Heart left ventricle (tissue), 16 donors: ENCODE measurements at regions of chr10 and their contacts with region 1.

Region 1: GRCh38 chr10:69644658-69645295 is 14.7 kb downstream of the FAM241B start:
- DNase-seq: peak in 4 of 5 donors; percentile 32 to 56 (median 49)
- ATAC-seq: peak in 3 of 4 donors; percentile 51 to 72 (median 56)
- H3K4me3 ChIP-seq: no peak overlapping the region
- H3K27ac ChIP-seq: no peak overlapping the region
- H3K4me1 ChIP-seq: no peaks in the 10 kb centered on the region
- H3K27me3 ChIP-seq: peaks cover 0 to 17% (median 4%) of the 10 kb centered on the region in 9 donors
- CTCF ChIP-seq: peak; percentile 67 to 89 (median 78)
- POLR2A ChIP-seq: no peak

Region 2: GRCh38 chr10:69278446-69278963 is 366.3 kb before region 1 on chr10 and contains the start of gene HK1:
- intact Hi-C with region 1: no loop called
- DNase-seq: peak in 3 of 5 donors; percentile 25 to 35 (median 27)
- ATAC-seq: peak in 3 of 4 donors; percentile 14 to 63 (median 24)
- H3K4me3 ChIP-seq: no peak within 1 kb of the TSS
- H3K27ac ChIP-seq: peak within 1 kb of the TSS in 6 of 12 donors; percentile 1 to 66 (median 16)
- H3K4me1 ChIP-seq: peaks cover 0 to 26% (median 10%) of the 10 kb centered on the region in 12 donors
- H3K27me3 ChIP-seq: no peaks in the 10 kb centered on the region
- CTCF ChIP-seq: no peak
- POLR2A ChIP-seq: no peak
- total RNA-seq, gene HK1: 194 to 310 (median 227) TPM

Region 3: GRCh38 chr10:69716711-69717560 is 72.2 kb after region 1 on chr10:
- intact Hi-C with region 1: loop called (anchors 1 to 2 kb)
- DNase-seq: peak in 1 of 5 donors; percentile 58
- ATAC-seq: peak in 3 of 4 donors; percentile 38 to 50 (median 38)
- H3K4me3 ChIP-seq: no peak overlapping the region
- H3K27ac ChIP-seq: no peak overlapping the region
- H3K4me1 ChIP-seq: peaks cover 0 to 17% (median under 1%) of the 10 kb centered on the region in 12 donors
- H3K27me3 ChIP-seq: no peaks in the 10 kb centered on the region
- CTCF ChIP-seq: peak; percentile 44 to 68 (median 61)
- POLR2A ChIP-seq: no peak